PC-3 (cell line): ENCODE measurements at regions of chr9 and their contacts with region 1.

Region 1: GRCh38 chr9:108565651-108566378 is 290.0 kb downstream of the ACTL7B start:
- DNase-seq: peak; percentile 90
- ATAC-seq: peak; percentile 72
- H3K4me3 ChIP-seq: no peak overlapping the region
- H3K27ac ChIP-seq: peak overlapping the region; percentile 74
- H3K4me1 ChIP-seq: peaks cover 25% of the 10 kb centered on the region
- H3K27me3 ChIP-seq: no peaks in the 10 kb centered on the region
- CTCF ChIP-seq: peak; percentile 90

Region 2: GRCh38 chr9:107421947-107422793 is 1143.6 kb before region 1 on chr9:
- CTCF ChIA-PET with region 1: no interaction called
- POLR2A ChIA-PET with region 1: no interaction called
- intact Hi-C with region 1: loop called (anchors 5 kb)
- DNase-seq: peak; percentile 75
- ATAC-seq: peak; percentile 97
- H3K4me3 ChIP-seq: no peak overlapping the region
- H3K27ac ChIP-seq: no peak overlapping the region
- H3K4me1 ChIP-seq: peaks cover 4% of the 10 kb centered on the region; the same call in 1 of the 2 replicates
- H3K27me3 ChIP-seq: no peaks in the 10 kb centered on the region
- CTCF ChIP-seq: peak; percentile 74

Region 3: GRCh38 chr9:107484117-107484723 is 1081.6 kb before region 1 on chr9:
- CTCF ChIA-PET with region 1: no interaction called
- POLR2A ChIA-PET with region 1: no interaction called
- intact Hi-C with region 1: loop called (anchors 5 kb)
- DNase-seq: peak; percentile 74
- ATAC-seq: peak; percentile 40
- H3K4me3 ChIP-seq: no peak overlapping the region
- H3K27ac ChIP-seq: no peak overlapping the region
- H3K4me1 ChIP-seq: peaks cover 27% of the 10 kb centered on the region
- H3K27me3 ChIP-seq: no peaks in the 10 kb centered on the region
- CTCF ChIP-seq: peak; percentile 66

Region 4: GRCh38 chr9:108225149-108225800 is 340.5 kb before region 1 on chr9:
- CTCF ChIA-PET with region 1: no interaction called
- POLR2A ChIA-PET with region 1: no interaction called
- intact Hi-C with region 1: no loop called
- DNase-seq: no peak
- ATAC-seq: no peak
- H3K4me3 ChIP-seq: no peak overlapping the region
- H3K27ac ChIP-seq: no peak overlapping the region
- H3K4me1 ChIP-seq: no peaks in the 10 kb centered on the region
- H3K27me3 ChIP-seq: no peaks in the 10 kb centered on the region
- CTCF ChIP-seq: no peak

Region 5: DNA sequence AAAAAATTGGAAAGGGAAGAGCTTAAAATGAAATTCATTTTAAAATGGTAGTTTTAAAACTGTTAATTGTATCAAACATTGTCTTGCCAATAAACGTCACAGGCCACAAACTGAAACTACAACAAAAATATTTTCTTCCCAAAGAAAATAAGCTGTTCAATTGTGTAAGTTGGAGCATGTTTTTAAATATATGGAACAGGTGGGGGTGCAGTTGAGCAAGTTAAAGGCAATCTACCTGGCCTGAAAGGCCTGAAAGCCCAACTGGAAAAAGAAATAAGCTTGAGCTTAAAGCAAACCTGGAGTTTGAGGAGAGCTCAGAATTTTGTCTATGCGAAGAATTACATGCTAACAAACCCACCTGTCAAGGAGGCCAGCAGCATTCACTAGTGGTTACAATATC is 149.5 kb before region 1 on chr9:
- CTCF ChIA-PET with region 1: interaction called, 26 read pairs
- POLR2A ChIA-PET with region 1: no interaction called
- intact Hi-C with region 1: loop called (anchors 1 kb)
- DNase-seq: peak; percentile 57
- ATAC-seq: peak; percentile 56
- H3K4me3 ChIP-seq: no peak overlapping the region
- H3K27ac ChIP-seq: peak overlapping the region; percentile 61
- H3K4me1 ChIP-seq: peaks cover 5% of the 10 kb centered on the region; the same call in 1 of the 2 replicates
- H3K27me3 ChIP-seq: no peaks in the 10 kb centered on the region
- CTCF ChIP-seq: peak; percentile 62

Region 6: DNA sequence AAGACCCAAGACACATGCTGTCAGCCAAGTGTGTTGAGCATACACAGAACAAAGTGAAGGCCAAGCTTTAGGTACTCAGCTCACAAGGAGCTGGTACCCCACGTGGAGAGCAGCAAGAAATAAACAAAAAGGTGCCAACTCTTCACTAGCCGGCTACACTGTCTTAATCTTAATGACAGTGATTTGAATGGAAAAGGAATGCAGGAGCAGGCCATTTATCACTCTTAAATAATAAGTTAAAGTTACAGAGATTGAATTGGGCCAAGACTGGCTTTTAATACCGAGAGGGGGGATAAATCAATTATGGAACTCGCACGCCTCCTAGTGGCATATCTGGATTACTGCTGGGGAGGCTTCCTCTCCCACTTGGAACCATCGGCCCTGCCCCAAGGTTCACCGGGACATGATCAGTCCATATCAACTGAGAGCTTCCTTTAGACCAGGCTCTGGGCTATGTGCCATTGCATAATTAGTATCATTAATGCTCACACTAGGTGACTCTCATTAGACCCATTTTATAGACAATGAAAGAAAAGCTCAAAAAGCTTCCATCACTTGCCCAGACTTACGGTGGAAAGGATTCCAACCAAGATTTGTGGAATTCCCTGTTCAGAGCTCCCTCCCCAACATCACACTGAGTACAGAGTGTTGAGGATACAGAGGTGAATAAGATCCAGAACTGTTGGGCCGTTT is 196.0 kb after region 1 on chr9:
- CTCF ChIA-PET with region 1: no interaction called
- POLR2A ChIA-PET with region 1: no interaction called
- intact Hi-C with region 1: loop called (anchors 5 kb)
- DNase-seq: peak; percentile 61
- ATAC-seq: peak; percentile 73
- H3K4me3 ChIP-seq: no peak overlapping the region
- H3K27ac ChIP-seq: no peak overlapping the region
- H3K4me1 ChIP-seq: no peaks in the 10 kb centered on the region
- H3K27me3 ChIP-seq: no peaks in the 10 kb centered on the region
- CTCF ChIP-seq: peak; percentile 77